Left lung (tissue), 14 donors: ENCODE measurements at regions of chr4 and their contacts with region 1.

Region 1: GRCh38 chr4:139030614-139031235 is 15.1 kb downstream of the NOCT start:
- DNase-seq: peak in 3 of 4 donors; percentile 51 to 87 (median 73)
- ATAC-seq: peak; percentile 93
- H3K4me3 ChIP-seq: no peak overlapping the region
- H3K27ac ChIP-seq: no peak overlapping the region
- H3K4me1 ChIP-seq: peaks cover 0 to 35% of the 10 kb centered on the region in 2 donors
- H3K27me3 ChIP-seq: no peaks in the 10 kb centered on the region
- CTCF ChIP-seq: peak; percentile 57 to 80

Region 2: GRCh38 chr4:139083956-139084803 is 53.5 kb after region 1 on chr4:
- intact Hi-C with region 1: loop called in 1 of 2 experiments (anchors 10 kb)
- DNase-seq: peak; percentile 82 to 95 (median 92)
- ATAC-seq: peak; percentile 74
- H3K4me3 ChIP-seq: peak overlapping the region; percentile 66 to 82
- H3K27ac ChIP-seq: peak overlapping the region; percentile 94 to 95
- H3K4me1 ChIP-seq: peaks cover 20 to 42% of the 10 kb centered on the region in 2 donors
- H3K27me3 ChIP-seq: no peaks in the 10 kb centered on the region
- CTCF ChIP-seq: peak; percentile 20 to 47

Region 3: DNA sequence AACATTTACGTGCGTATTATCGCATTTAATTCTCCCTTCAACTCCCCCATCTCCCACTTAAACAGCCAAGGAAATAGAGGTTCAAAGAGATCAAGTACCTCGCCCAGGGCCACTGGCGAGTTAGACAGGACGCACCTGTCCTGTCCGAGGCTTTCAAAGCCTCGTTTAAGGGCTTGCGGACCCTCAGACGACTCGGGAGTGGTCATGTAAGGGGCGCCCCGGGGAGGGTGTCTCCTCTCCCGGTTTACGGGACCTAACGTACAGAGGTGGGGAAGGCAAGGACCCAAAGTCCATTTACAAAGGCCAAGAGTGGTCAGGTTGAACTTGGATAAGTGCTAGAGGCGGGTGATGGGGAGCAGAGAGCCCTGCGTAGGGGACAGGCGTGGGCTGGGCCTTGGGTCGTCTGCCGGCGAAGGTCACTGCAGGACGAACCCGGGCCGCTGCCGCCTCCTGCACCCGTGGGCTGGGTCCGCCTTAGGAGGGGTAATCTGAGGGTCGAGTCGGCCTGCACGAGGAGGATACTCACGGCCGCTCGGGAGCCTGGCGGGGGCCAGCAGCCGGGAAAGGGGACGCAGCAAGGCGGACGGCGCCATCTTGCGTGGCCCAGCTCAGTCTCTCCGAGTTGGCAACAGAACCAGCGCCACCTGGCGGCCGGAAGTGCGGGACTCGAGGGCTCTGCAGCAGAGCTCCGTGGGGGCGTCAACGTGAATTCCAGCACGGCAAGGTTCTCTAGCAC is 264.6 kb after region 1 on chr4:
- intact Hi-C with region 1: loop called in 1 of 2 experiments (anchors 10 kb)
- DNase-seq: peak; percentile 95 to 100 (median 98)
- ATAC-seq: peak; percentile 98
- H3K4me3 ChIP-seq: peak overlapping the region; percentile 74 to 90
- H3K27ac ChIP-seq: peak overlapping the region; percentile 76 to 85
- H3K4me1 ChIP-seq: peaks cover 11 to 47% of the 10 kb centered on the region in 2 donors
- H3K27me3 ChIP-seq: no peaks in the 10 kb centered on the region
- CTCF ChIP-seq: peak; percentile 95 to 96